Right ventricle myocardium superior (tissue), 1 donor: ENCODE measurements at regions of chr2 and their contacts with region 1.

Region 1: GRCh38 chr2:197992482-197993133 is 188.2 kb downstream of the PLCL1 start:
- DNase-seq: no peak
- ATAC-seq: no peak

Region 2: DNA sequence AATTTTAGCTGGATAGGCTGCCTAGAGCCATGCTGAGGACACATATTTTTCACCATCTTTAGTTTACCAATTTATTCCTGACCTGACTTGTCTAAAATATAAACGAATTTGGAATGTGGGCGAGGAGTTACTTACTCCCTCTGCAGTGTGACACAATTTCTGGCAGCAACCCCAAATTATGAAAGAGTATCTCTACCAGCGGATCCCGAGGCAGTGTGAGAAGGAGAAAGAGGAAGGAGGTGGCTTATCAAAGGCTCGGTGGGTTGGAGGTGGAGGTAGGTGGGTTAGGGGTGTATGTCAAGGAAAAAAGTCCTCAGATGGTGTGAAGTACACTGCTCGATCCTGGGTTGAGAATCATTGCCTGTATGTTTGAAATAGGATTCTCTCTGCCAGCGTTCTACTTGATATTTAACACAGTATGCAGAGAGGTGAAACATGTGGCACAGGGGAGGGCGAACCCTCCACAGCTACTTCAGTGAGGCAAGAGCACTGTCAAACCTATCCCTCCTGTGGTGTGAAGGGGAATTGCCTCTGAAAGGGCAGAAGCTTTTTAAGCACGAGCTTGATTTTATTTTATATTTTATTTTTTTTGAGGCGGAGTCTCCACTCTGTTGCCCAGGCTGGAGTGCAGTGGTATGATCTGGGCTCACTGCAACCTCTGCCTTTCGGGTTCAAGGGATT is 393.2 kb before region 1 on chr2:
- intact Hi-C with region 1: no loop called
- DNase-seq: no peak
- ATAC-seq: peak; percentile 66

Region 3: GRCh38 chr2:197641666-197642065 is 350.9 kb before region 1 on chr2:
- intact Hi-C with region 1: no loop called
- DNase-seq: no peak
- ATAC-seq: no peak

Region 4: GRCh38 chr2:197908990-197909776 is 83.4 kb before region 1 on chr2:
- intact Hi-C with region 1: no loop called
- DNase-seq: no peak
- ATAC-seq: peak; percentile 58

Region 5: GRCh38 chr2:198116756-198117155 is 124.1 kb after region 1 on chr2:
- intact Hi-C with region 1: loop called (anchors 10 kb)
- DNase-seq: no peak
- ATAC-seq: peak; percentile 23